MCF 10A (cell line): ENCODE measurements at regions of chr17 and their contacts with region 1.

Region 1: GRCh38 chr17:73841431-73842060 is 197.3 kb upstream of the SDK2 start:
- DNase-seq: peak; percentile 30
- H3K4me3 Mint-ChIP-seq: no peak overlapping the region
- H3K27ac Mint-ChIP-seq: no peak overlapping the region
- H3K4me1 Mint-ChIP-seq: no peaks in the 10 kb centered on the region
- H3K27me3 Mint-ChIP-seq: peaks cover 11% of the 10 kb centered on the region
- CTCF ChIP-seq: peak; percentile 83

Region 2: GRCh38 chr17:73683771-73684170 is 157.8 kb before region 1 on chr17:
- CTCF ChIA-PET with region 1: no interaction called
- POLR2A ChIA-PET with region 1: no interaction called
- intact Hi-C with region 1: no loop called
- DNase-seq: no peak
- H3K4me3 Mint-ChIP-seq: no peak overlapping the region
- H3K27ac Mint-ChIP-seq: no peak overlapping the region
- H3K4me1 Mint-ChIP-seq: no peaks in the 10 kb centered on the region
- H3K27me3 Mint-ChIP-seq: peaks cover 77% of the 10 kb centered on the region
- CTCF ChIP-seq: no peak

Region 3: DNA sequence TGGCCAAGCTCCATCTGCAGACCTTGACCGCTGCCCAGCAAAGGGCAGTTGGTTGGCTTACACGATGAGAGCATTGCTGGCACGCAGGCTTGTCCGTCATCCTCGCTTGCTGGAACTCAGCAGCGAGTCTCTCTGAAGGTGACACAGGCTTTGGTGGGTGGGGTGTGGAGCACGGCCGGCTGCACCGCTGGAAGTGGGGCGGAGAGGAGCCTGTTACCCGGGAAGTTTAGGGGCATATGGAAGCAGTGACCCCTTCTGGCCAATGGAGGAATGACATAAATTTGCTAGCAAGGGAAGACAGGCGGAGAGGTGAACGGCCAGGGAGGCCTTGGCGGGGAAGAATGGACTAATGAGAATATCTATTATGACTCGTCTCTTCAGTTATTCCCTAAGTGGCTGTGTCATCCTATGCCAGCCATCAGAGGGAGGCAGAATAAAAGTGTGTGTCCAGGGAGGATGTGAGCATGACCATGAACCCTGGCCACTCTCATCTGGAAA is 131.4 kb before region 1 on chr17:
- CTCF ChIA-PET with region 1: no interaction called
- POLR2A ChIA-PET with region 1: no interaction called
- intact Hi-C with region 1: loop called (anchors 5 kb)
- DNase-seq: peak; percentile 56
- H3K4me3 Mint-ChIP-seq: no peak overlapping the region
- H3K27ac Mint-ChIP-seq: no peak overlapping the region
- H3K4me1 Mint-ChIP-seq: no peaks in the 10 kb centered on the region
- H3K27me3 Mint-ChIP-seq: peaks cover 37% of the 10 kb centered on the region
- CTCF ChIP-seq: peak; percentile 82